Prostate gland (tissue), 2 donors: ENCODE measurements at regions of chr17 and their contacts with region 1.

Region 1: GRCh38 chr17:76614912-76615617 is 28.5 kb downstream of the ST6GALNAC1 start:
- DNase-seq: no peak
- H3K4me3 ChIP-seq: no peak overlapping the region
- H3K27ac ChIP-seq: no peak overlapping the region
- H3K4me1 ChIP-seq: no peaks in the 10 kb centered on the region
- H3K27me3 ChIP-seq: no peaks in the 10 kb centered on the region
- CTCF ChIP-seq: no peak
- POLR2A ChIP-seq: no peak

Region 2: DNA sequence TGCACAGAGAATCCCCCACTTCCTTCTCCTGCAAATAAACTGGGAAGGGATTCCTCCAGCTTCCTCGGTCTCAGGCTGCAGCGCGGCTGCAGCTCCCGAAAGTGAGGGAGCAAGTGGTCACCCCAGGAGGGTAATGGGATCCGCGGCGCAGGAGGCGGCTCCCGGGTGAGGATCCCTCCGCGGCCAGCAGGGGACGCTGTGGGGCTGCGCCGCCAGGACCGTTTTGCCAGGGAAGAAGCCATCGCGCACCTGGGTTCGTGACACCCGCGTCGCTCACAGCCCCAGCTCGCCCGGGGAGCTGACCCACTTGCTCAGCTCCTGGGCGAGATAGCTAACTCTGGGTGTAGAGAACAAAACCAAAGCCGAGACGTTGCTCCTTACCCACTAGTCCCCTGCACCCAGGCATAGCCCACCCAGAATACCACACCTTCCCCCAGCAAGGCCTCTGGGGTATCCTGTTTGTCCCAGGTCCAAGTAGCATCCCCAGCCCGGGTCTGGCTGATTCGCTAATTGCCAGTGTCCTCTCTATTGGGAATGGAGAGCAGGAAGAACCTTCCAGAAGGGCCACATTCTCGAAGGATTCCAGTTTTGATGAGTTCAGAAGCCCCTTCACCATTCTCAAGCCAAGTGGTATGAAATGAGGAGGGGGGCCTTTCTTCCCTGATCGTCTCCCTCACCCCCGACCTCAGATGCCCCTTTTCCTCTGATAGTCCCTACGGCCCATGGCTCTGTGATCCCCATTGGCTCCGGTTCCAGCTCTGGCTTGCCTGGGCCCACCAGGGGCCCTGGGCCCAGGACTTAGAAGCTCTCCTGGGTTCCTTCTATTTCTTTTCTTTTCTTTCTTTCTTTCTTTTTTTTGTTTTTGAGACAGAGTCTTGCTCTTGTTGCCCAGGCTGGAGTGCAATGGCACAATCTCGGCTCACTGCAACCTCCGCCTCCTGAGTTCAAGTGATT is 91.7 kb before region 1 on chr17:
- intact Hi-C with region 1: loop called (anchors 5 kb)
- DNase-seq: no peak
- H3K4me3 ChIP-seq: no peak overlapping the region
- H3K27ac ChIP-seq: no peak overlapping the region
- H3K4me1 ChIP-seq: peaks cover 7% of the 10 kb centered on the region
- H3K27me3 ChIP-seq: no peaks in the 10 kb centered on the region
- CTCF ChIP-seq: peak; percentile 99
- POLR2A ChIP-seq: no peak